Astrocyte of the cerebellum (primary cell): ENCODE measurements at regions of chr3 and their contacts with region 1.

Region 1: DNA sequence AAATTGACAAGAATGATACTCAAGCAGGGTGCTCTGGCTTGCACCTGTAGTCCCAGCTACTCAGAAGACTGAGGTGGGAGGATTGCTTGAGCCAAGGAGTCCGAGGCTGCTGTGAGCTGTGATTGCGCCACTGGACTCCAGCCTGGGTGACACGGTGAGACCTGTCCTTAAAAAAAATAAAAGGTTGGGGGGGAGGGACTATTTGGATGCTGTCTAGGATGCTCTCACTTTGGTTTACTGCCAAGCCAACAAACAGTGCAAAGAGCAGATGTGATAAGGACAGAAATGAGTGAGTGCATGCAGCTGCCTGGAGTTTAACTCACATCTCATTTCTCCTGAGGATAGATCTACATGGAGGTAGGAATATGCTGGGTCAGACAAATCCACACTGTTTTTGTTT is 130.0 kb downstream of the FRMD4B start:
- DNase-seq: no peak
- H3K4me3 ChIP-seq: no peak overlapping the region
- CTCF ChIP-seq: no peak

Region 2: DNA sequence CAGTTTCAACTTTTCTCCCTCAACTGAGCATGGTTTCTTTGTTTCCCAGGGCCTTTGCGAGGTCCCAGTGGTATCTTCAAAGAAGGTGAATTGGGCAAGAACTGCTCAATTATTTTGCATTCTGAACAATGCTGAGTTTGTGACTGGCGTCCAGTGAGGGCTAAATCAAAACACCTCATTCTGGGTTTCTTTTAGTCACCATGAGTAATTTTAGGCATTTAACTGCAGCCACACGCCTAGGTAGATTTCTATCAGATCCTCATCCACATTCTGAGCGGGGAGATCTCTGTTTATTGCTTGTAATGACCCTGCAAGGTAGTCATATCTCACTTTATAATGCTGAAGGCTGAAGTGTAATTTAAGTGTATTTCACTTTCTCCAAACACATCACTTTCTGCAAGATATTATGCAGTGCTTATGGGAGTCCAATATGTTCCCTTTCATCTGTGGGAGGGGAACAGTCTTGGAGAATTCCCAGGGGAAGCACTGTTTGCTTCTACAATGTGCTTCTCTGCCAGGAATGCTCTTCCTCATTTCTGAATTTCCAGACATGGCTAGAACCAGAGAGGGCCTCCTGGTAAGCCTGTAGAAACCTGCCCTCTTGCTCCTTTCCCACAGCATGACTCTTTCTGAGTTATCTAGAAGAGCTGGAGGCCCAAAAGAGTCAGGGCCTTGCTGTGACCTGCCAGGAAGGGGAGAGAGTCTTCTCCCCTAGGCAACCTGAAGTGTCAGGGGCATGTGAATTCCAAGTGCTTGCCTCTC is 38.3 kb after region 1 on chr3:
- in situ Hi-C with region 1: loop called (anchors 5 kb)
- DNase-seq: no peak
- H3K4me3 ChIP-seq: no peak overlapping the region
- CTCF ChIP-seq: no peak